K562 (cell line): ENCODE measurements at regions of chr22 and their contacts with region 1.

Region 1: DNA sequence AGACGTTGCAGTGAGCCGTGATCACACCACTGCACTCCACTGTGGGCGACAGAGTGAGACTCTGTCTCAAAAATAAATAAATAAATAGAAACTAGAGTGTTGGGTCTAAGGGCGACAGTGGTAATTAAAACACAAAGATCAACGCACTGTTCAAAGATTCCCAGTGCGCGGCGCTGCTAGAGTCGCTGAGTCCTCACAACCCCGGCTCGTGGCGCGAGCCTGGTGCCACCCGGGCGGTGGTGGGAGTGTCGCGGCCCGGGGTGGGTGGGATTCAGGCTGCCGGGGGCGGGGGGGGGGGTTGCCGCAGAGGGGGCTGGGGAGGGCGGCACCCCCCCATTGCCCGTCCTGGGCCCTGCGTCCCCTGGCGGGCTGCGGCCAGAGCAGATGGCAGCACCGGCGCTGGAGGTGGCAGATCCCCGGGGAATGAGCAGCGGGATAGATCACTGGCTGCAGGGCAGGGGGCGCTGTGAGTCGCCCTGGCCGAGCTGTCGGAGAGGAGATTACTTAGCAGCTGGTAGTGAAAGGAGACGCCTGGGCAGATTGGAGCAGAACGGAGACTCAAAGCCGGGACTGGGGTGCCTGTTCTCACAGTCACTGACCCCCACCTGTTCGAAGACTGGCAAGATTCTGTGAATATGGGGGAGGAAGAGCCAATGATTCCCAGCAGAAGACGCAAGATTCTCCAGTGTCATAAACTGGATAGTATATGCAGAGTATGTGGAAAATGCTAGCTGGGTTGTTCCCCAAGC is 30.2 kb upstream of the APOBEC3A start:
- DNase-seq: peak in 1 of 4 experiments; percentile 30
- ATAC-seq: peak; percentile 66
- H3K4me3 ChIP-seq: no peak overlapping the region
- H3K27ac ChIP-seq: no peak overlapping the region
- H3K4me1 ChIP-seq: peaks cover 5 to 11% of the 10 kb centered on the region in 2 experiments
- H3K27me3 ChIP-seq: no peaks in the 10 kb centered on the region
- CTCF ChIP-seq: peak; percentile 35 to 49 (median 41); a peak in 3 of 6 replicates
- EP300 ChIP-seq: no peak
- POLR2A ChIP-seq: no peak
- RAD21 ChIP-seq: peak in 1 of 2 experiments; percentile 8; a peak in 1 of 4 replicates

Region 2: DNA sequence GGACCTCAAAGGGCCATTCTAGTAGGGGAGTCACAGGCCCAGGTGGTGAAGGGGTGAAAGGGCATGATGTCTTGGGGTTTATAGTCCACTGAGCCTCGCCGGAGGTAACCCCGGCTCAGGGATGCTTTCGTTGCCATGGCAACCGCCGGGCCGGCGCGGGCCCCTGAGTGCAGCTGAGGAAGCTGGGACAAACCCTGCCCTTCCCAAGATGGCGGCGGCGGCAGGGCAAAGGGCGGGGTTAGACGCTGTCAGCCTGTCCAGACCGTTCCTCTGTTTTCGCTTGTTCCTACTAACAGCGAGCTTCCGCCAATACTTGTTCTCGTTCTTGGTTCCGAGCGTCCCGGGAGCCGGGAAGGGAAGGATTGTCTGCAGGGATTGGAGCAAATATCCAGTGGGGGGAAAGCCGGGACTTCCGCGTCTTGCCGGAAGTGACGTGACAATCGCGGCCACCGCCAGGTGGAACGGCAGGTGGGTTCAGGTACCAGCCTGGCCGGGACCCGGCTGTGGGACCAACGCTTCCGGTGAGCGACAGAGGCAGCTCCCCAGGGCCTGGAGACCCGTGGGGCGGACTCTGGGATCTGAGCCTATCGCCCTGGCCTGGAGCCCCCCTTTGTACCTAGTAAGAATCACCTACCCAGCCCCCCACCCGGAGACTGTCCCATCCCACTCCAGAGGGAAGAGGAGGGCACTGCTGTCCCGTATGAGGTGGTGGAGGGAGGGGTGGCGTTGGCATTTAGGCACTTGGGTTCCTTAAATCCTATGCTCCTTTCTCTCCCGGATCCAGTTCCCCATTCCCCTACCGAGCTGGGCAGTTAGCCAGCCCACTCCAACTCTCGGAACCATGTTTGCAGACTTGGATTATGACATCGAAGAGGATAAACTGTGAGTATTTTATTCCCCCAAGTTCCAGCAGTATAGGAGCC is 870.0 kb before region 1 on chr22 and contains the start of gene PICK1:
- CTCF ChIA-PET with region 1: no interaction called
- POLR2A ChIA-PET with region 1: no interaction called
- in situ Hi-C with region 1: no loop called
- intact Hi-C with region 1: no loop called
- DNase-seq: peak; percentile 83 to 92 (median 92)
- ATAC-seq: peak; percentile 93
- H3K4me3 ChIP-seq: peak within 1 kb of the TSS; percentile 76
- H3K27ac ChIP-seq: peak within 1 kb of the TSS; percentile 94
- H3K4me1 ChIP-seq: peaks cover 3 to 14% of the 10 kb centered on the region in 2 experiments; a peak in 3 of 5 replicates
- H3K27me3 ChIP-seq: peaks cover 0 to 20% of the 10 kb centered on the region in 2 experiments; a peak in 2 of 5 replicates
- CTCF ChIP-seq: no peak
- EP300 ChIP-seq: no peak
- POLR2A ChIP-seq: peak; percentile 58
- RAD21 ChIP-seq: no peak
- polyA plus RNA-seq, gene PICK1: 0.06 TPM in 1 of 2 experiments, not detected in the other

Region 3: GRCh38 chr22:38766076-38766777 is 161.0 kb before region 1 on chr22:
- CTCF ChIA-PET with region 1: no interaction called
- POLR2A ChIA-PET with region 1: no interaction called
- in situ Hi-C with region 1: no loop called
- intact Hi-C with region 1: no loop called
- DNase-seq: peak; percentile 45 to 59 (median 51)
- ATAC-seq: peak; percentile 82
- H3K4me3 ChIP-seq: no peak overlapping the region
- H3K27ac ChIP-seq: no peak overlapping the region
- H3K4me1 ChIP-seq: peaks cover 0 to 17% of the 10 kb centered on the region in 2 experiments; a peak in 3 of 5 replicates
- H3K27me3 ChIP-seq: no peaks in the 10 kb centered on the region
- CTCF ChIP-seq: peak; percentile 60 to 77 (median 63)
- EP300 ChIP-seq: no peak
- POLR2A ChIP-seq: no peak
- RAD21 ChIP-seq: peak in 1 of 2 experiments; percentile 41; a peak in 2 of 4 replicates

Region 4: GRCh38 chr22:38872172-38872830 is 54.9 kb before region 1 on chr22 and contains the start of gene CBX6:
- CTCF ChIA-PET with region 1: no interaction called
- POLR2A ChIA-PET with region 1: no interaction called
- in situ Hi-C with region 1: no loop called
- intact Hi-C with region 1: loop called (anchors 10 kb)
- DNase-seq: peak; percentile 92 to 95 (median 93)
- ATAC-seq: peak; percentile 70
- H3K4me3 ChIP-seq: peak within 1 kb of the TSS; percentile 62
- H3K27ac ChIP-seq: peak within 1 kb of the TSS; percentile 68
- H3K4me1 ChIP-seq: peaks cover 13 to 27% of the 10 kb centered on the region in 2 experiments
- H3K27me3 ChIP-seq: peaks cover 0 to 5% of the 10 kb centered on the region in 2 experiments; a peak in 2 of 5 replicates
- CTCF ChIP-seq: no peak
- EP300 ChIP-seq: no peak
- POLR2A ChIP-seq: no peak; the same call in 1 of the 2 replicates
- RAD21 ChIP-seq: no peak
- polyA plus RNA-seq, gene CBX6: 0.75 to 1.2 TPM

Region 5: GRCh38 chr22:39003165-39003638 is 76.0 kb after region 1 on chr22:
- CTCF ChIA-PET with region 1: no interaction called
- POLR2A ChIA-PET with region 1: no interaction called
- in situ Hi-C with region 1: no loop called
- intact Hi-C with region 1: loop called (anchors 2 kb)
- DNase-seq: peak; percentile 61 to 72 (median 64)
- ATAC-seq: peak; percentile 95
- H3K4me3 ChIP-seq: no peak overlapping the region
- H3K27ac ChIP-seq: no peak overlapping the region
- H3K4me1 ChIP-seq: no peaks in the 10 kb centered on the region; a peak in 1 of 5 replicates
- H3K27me3 ChIP-seq: peaks cover 0 to 9% of the 10 kb centered on the region in 2 experiments; a peak in 1 of 5 replicates
- CTCF ChIP-seq: peak; percentile 67 to 74 (median 70)
- EP300 ChIP-seq: no peak
- POLR2A ChIP-seq: no peak
- RAD21 ChIP-seq: peak; percentile 36 to 71

Region 6: DNA sequence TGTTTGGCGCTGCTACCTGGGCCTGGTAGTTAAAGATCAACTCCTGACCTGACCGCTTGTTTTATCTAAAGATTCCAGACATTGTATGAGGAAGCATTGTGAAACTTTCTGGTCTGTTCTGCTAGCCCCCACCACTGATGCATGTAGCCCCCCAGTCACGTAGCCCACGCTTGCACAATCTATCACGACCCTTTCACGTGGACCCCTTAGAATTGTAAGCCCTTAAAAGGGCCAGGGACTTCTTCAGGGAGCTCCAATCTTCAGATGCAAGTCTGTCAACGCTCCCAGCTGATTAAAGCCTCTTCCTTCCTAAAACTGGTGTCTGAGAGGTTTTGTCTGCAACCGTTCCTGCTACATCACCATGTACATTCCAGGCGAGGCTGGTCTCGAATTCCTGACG is 128.5 kb after region 1 on chr22:
- CTCF ChIA-PET with region 1: no interaction called
- POLR2A ChIA-PET with region 1: no interaction called
- in situ Hi-C with region 1: no loop called
- intact Hi-C with region 1: no loop called
- DNase-seq: no peak
- ATAC-seq: no peak
- H3K4me3 ChIP-seq: no peak overlapping the region
- H3K27ac ChIP-seq: no peak overlapping the region
- H3K4me1 ChIP-seq: peaks cover 0 to 8% of the 10 kb centered on the region in 2 experiments; a peak in 2 of 5 replicates
- H3K27me3 ChIP-seq: no peaks in the 10 kb centered on the region
- CTCF ChIP-seq: no peak
- EP300 ChIP-seq: no peak
- POLR2A ChIP-seq: no peak
- RAD21 ChIP-seq: no peak